Left cardiac atrium (tissue), 4 donors: ENCODE measurements at regions of chr12 and their contacts with region 1.

Region 1: GRCh38 chr12:20320552-20320951 is 47.8 kb upstream of the PDE3A start:
- DNase-seq: no peak
- ATAC-seq: peak; percentile 53 to 67

Region 2: DNA sequence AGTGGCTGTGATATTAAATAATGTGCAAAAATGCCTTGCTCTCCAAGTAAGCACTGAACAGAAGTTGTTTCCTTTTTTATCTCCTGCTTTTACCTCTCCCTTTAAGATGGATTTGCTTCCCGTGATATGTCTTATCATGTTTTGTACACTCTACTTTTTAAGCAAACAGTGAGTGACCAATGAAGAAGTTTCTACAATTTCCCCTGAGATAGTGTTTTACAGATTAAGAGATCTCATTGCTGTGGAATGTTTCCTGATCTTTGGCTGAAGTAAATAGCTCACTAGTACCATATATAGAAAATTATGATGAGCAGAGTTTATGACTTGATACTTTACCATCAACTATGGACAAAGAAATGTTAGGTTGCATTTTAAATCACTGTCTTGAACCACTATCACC is 137.0 kb before region 1 on chr12:
- intact Hi-C with region 1: no loop called
- DNase-seq: no peak
- ATAC-seq: peak in 1 of 2 donors; percentile 49

Region 3: GRCh38 chr12:20272801-20273200 is 47.8 kb before region 1 on chr12:
- intact Hi-C with region 1: loop called in 1 of 2 experiments (anchors 5 kb)
- DNase-seq: no peak
- ATAC-seq: peak; percentile 84 to 85